HEK293 (cell line): ENCODE measurements at regions of chr5 and their contacts with region 1.

Region 1: GRCh38 chr5:159106569-159107282 is 7.0 kb upstream of the EBF1 start:
- H3K4me3 ChIP-seq: no peak overlapping the region; the same call in 1 of the 2 replicates
- H3K27ac ChIP-seq: no peak overlapping the region
- H3K4me1 ChIP-seq: no peaks in the 10 kb centered on the region
- CTCF ChIP-seq: peak; percentile 97

Region 2: DNA sequence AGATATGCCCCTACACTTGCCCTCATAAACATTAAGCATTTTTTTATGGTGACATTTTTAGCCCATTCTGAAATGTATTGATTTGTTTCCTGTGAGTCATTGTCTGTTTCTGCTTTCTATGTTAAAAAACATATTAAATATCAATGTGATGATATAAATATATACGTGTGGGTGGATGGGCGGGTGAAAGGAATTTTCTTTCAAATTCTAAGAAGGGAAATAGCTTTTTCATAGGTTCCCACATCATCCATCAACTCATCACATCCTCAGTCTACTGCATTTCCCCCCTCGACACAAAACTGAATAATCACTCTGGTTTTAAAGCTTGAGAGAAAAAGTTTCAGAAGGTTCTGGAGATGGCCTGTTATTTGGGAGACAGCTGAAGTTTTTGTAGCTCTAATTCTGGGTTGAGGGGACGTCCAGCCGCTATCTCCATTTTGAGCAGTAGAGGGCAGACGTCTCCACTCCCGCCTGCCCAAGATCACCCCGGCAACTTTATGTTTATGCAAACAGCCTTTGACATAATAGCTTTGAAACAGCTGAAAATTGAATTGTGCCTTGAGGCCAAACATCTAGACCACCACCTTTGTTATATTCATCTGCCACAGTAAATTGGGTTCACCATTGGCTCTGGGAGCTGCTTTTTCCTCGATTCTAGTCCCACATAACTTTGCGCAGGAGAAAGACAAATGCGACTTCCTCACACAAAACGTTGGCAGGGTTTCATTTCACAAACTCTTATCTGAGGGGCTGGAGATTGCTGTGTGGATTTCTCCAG is 1031.5 kb before region 1 on chr5:
- CTCF ChIA-PET with region 1: interaction called, 11 read pairs
- POLR2A ChIA-PET with region 1: interaction called, 4 read pairs
- H3K4me3 ChIP-seq: no peak overlapping the region
- H3K27ac ChIP-seq: no peak overlapping the region
- H3K4me1 ChIP-seq: no peaks in the 10 kb centered on the region
- CTCF ChIP-seq: peak; percentile 57

Region 3: DNA sequence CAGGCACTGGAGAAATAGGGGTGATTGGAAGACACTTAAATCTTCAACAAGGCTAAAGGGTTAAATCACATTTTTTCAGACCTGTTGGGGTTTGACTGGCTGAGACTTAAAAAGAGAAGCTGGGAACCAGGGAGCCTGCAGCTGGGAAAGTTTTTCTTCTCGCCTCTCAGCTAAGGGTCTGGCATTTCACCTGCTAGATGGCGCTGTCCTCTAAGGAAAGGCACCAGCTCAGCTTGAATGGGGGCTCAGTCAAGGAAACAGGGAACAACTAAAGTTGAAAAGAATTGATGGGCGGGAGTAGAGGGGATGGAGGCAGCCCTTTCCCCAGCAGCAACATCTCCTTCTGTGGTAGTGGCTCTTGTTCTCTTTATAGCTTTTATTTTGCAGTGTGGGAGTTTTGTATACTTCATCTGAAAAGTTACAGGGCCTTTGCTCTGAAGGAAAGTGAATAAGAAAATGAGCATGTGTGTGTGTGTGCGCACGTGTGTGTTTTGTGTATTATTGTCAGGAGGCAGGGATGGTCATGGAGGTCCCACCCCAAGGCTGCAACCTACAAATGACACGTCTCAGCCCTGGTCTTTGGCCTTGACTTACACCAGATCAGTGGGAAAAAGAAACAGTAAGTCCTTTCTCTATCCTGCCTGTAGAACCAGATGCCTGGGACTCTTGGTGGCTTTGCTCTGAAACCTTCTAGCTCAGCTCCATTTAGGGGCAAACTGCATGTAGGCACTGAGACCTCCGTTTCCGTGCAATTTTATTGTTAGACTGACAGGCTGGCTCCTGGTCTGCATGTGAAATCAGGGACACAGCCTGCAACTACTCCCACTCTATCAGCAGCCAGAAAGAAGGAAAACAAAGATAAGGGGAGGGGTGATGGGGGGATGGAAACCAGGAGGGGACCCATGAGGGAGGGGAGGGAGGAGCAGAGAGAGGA is 931.5 kb before region 1 on chr5:
- CTCF ChIA-PET with region 1: interaction called, 60 read pairs
- POLR2A ChIA-PET with region 1: no interaction called
- H3K4me3 ChIP-seq: no peak overlapping the region
- H3K27ac ChIP-seq: peak overlapping the region; percentile 83; the same call in 1 of the 2 replicates
- H3K4me1 ChIP-seq: peaks cover 15% of the 10 kb centered on the region
- CTCF ChIP-seq: peak; percentile 80; the same call in 1 of the 2 replicates

Region 4: GRCh38 chr5:158695595-158696330 is 411.0 kb before region 1 on chr5:
- CTCF ChIA-PET with region 1: interaction called, 88 read pairs
- POLR2A ChIA-PET with region 1: interaction called, 4 read pairs
- H3K4me3 ChIP-seq: no peak overlapping the region
- H3K27ac ChIP-seq: no peak overlapping the region
- H3K4me1 ChIP-seq: peaks cover 14% of the 10 kb centered on the region
- CTCF ChIP-seq: peak; percentile 76

Region 5: GRCh38 chr5:158739951-158740757 is 366.6 kb before region 1 on chr5:
- CTCF ChIA-PET with region 1: interaction called, 12 read pairs
- POLR2A ChIA-PET with region 1: no interaction called
- H3K4me3 ChIP-seq: no peak overlapping the region
- H3K27ac ChIP-seq: no peak overlapping the region
- H3K4me1 ChIP-seq: no peaks in the 10 kb centered on the region
- CTCF ChIP-seq: no peak

Region 6: GRCh38 chr5:158953929-158954534 is 152.7 kb before region 1 on chr5:
- CTCF ChIA-PET with region 1: no interaction called
- POLR2A ChIA-PET with region 1: no interaction called
- H3K4me3 ChIP-seq: no peak overlapping the region
- H3K27ac ChIP-seq: no peak overlapping the region
- H3K4me1 ChIP-seq: peaks cover 3% of the 10 kb centered on the region; the same call in 1 of the 2 replicates
- CTCF ChIP-seq: no peak

Region 7: GRCh38 chr5:159091065-159091464 is 15.7 kb before region 1 on chr5:
- CTCF ChIA-PET with region 1: interaction called, 11 read pairs
- POLR2A ChIA-PET with region 1: interaction called, 6 read pairs
- H3K4me3 ChIP-seq: no peak overlapping the region
- H3K27ac ChIP-seq: no peak overlapping the region
- H3K4me1 ChIP-seq: peaks cover 17% of the 10 kb centered on the region
- CTCF ChIP-seq: no peak

Region 8: GRCh38 chr5:159133041-159133741 is 26.5 kb after region 1 on chr5:
- CTCF ChIA-PET with region 1: interaction called, 16 read pairs
- POLR2A ChIA-PET with region 1: no interaction called
- H3K4me3 ChIP-seq: no peak overlapping the region
- H3K27ac ChIP-seq: no peak overlapping the region; the same call in 1 of the 2 replicates
- H3K4me1 ChIP-seq: peaks cover 11% of the 10 kb centered on the region
- CTCF ChIP-seq: peak; percentile 58; the same call in 1 of the 2 replicates

Region 9: GRCh38 chr5:159749146-159749545 is 642.4 kb after region 1 on chr5:
- CTCF ChIA-PET with region 1: no interaction called
- POLR2A ChIA-PET with region 1: no interaction called
- H3K4me3 ChIP-seq: no peak overlapping the region
- H3K27ac ChIP-seq: no peak overlapping the region
- H3K4me1 ChIP-seq: no peaks in the 10 kb centered on the region
- CTCF ChIP-seq: no peak